Head of caudate nucleus (tissue), 42 donors: ENCODE measurements at regions of chr3 and their contacts with region 1.

Region 1: GRCh38 chr3:69306239-69307185 is 79.4 kb downstream of the FRMD4B start:
- DNase-seq: peak; percentile 41 to 92 (median 78)

Region 2: GRCh38 chr3:69542221-69543079 is 235.9 kb after region 1 on chr3:
- intact Hi-C with region 1: loop called (anchors 10 kb)
- DNase-seq: peak; percentile 68 to 94 (median 86)

Region 3: DNA sequence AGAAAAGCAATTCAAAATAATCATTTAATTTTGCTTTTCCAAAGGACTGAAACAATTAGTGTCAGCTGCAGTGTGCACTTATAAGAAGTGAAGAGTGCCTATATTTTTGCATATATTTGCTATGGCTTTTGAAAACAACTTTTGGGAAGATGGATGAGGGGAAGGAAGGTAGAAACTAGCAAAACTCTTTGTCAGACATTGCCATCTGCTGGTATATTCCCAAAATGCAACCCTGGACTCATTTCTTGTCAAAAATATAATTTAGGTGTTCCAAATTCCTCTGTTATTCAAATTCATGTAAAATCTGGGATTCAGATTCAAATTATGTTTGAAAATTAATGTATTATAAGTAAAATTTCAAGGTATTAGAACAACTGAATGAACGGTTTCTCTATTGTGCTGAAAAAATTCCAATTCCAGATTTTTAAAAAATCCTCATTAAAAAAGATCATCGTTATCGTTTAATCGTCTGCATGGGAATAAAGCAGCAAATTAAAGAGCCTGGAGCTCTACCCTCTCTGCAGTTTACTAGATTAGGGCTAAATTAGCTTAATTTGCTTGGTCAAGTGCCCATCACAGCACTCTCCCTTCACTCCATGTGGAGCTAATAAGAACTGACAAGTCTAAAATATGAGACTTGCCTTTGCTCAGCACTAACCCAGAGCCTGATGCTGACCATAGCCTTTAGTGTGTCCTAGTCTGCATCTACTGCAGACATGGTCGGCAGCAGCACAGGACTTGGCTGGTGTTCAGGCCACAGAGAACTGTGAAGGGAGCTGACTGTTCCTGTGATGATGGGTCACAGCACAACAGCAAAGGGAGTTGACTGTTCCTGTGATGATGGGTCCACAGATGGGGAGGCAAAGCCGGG is 364.8 kb after region 1 on chr3:
- intact Hi-C with region 1: loop called (anchors 10 kb)
- DNase-seq: peak in 29 of 42 donors; percentile 6 to 90 (median 49)